ENCODE measurements at regions of chr21 and their contacts with region 1.

Region 1: DNA sequence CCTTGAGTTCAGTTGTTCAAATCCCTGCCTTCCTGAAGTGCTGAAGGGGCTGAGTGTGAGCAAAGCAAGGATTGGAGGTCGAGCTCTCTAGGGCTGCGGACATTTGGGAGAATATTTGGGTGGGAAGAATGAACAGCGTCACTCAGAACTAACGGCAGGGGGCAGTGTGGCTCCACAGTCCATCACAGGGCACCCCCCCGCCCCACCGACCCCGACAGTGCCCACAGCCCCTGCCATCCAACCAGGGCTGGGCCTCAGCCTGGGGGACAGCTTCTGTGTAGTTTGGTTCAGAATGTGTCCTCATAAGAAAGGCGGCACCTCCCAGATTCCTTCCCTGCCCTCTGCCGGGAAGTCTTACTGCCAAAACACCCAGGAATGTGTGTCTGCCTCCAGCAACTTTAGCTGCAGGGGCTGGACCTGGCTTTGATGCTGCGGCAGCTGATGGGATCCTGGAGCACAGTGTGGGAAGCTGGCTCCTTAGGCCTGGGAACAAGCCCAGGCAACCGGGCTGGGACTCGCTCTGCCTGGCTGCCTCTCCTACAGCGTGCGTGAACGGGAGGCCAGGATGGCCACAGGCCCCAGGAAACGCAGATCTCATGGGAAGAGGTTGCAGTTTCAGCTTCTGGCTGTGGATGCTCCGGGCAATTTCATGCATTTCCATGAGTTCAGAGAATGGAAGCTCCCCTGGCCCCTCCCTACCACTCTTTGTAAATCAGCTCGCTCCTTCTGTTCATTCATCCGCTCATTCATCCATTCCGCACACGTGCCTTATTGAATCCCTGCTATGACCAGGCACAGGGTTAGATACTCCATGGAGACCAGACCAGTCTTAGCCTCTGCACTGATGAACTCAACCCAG is 104.9 kb upstream of the TMPRSS2 start:
- ATAC-seq: peak; percentile 74 to 81 (median 80)
- H3K4me3 ChIP-seq: no peak overlapping the region
- H3K27ac ChIP-seq: no peak overlapping the region
- H3K4me1 ChIP-seq: peaks cover 6 to 12% of the 10 kb centered on the region in 2 donors

Region 2: DNA sequence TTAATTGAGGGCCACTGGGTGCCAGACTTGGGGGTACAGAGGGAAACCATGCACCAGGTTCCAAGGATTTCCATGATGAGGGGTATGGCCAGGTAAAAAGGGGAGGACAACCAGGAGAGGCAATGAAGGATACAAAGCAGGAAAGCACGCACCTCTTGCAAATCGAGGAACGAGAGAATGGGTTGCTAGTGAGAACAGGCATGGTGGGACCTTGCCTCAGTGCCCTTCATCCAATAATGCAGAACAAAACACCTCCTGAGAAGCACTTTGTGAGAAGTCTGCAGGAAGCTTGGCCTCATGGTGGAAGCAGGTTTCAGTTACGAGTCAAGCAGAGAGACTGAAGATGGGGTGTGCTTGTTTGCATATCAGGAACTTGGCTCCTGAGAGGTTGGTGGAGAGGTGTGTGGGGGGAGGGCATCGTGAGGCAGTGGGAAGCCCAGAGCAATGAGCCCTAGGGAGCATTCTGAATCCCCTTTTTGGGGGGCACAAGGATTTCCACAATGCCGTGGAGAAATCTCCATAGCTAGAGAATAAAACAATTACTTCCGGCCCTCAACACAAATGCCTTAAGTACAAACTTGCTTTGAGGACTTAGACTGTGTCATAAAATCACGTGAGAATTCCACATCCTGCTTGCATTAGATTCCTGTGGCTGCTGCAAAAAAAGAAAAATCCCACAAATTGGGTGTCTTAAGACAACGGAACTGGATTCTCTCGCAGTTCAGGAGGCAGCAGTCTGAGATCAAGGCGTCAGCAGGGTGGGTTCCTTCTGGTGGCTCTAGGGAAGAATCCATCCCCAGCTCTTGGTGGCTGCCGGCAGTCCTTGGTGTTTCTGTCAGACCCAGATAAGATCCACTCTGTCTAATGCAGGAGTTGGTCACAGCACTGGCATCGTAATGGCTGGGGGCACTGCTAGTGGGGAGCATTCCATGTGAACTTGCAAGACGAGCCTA is 499.9 kb before region 1 on chr21:
- in situ Hi-C with region 1: no loop called
- ATAC-seq: peak in 7 of 8 experiments; percentile 70 to 98 (median 85)
- H3K4me3 ChIP-seq: no peak overlapping the region
- H3K27ac ChIP-seq: no peak overlapping the region
- H3K4me1 ChIP-seq: peaks cover 8% of the 10 kb centered on the region in 2 donors

Region 3: GRCh38 chr21:41283211-41283818 is 329.6 kb before region 1 on chr21:
- in situ Hi-C with region 1: no loop called
- ATAC-seq: peak; percentile 91 to 99 (median 96)
- H3K4me3 ChIP-seq: no peak overlapping the region
- H3K27ac ChIP-seq: no peak overlapping the region
- H3K4me1 ChIP-seq: peaks cover 0 to 7% of the 10 kb centered on the region in 2 donors

Region 4: GRCh38 chr21:41777951-41778874 is 165.3 kb after region 1 on chr21:
- in situ Hi-C with region 1: loop called in 7 of 9 experiments (anchors 10 to 25 kb)
- ATAC-seq: peak; percentile 73 to 98 (median 94)
- H3K4me3 ChIP-seq: no peak overlapping the region
- H3K27ac ChIP-seq: no peak overlapping the region
- H3K4me1 ChIP-seq: no peaks in the 10 kb centered on the region

Region 5: DNA sequence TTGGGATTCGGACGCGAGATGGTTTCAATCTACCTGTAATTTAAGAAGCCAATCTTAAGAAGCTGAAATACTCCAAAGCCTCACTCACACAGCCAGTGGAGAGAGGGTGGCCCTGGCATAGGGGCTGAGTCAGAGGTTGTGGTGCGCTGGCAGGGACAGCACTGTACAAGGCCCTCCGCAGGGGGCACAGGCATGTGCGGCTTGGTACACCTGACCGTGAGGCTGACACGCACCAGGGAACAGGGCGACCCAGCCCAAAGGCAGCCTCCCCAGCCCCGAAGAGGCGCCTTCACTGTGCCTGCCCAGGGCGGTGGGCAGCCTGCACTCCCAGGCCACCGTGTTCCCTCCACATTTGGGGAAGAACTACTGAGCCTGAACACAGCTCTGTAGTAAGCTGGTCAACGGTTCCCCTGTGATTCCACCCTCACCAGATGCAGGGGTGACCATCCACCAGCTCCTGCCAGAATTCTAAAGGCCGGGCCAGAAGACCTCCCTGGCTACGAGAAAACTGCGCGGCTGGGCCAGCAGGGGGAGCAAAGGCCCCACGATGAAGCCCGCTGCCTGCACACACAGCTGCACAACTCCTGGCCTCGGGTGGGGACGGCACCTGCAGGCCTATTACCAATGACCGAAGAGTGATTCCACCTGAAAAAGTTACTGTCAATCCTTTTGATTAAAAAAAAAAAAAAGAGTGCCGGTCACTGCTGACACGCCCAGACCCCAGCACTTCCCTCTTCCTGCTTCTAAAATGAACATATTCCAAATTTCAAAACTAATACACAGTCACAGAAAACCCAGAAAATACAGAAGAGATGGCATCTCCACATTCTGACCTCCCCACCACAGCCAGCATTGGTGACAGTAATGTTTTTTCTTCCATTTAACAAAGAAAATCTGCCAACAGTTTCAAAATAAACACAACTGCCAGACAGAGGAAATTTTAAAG is 203.6 kb after region 1 on chr21:
- in situ Hi-C with region 1: loop called in 1 of 9 experiments (anchors 25 kb)
- ATAC-seq: peak; percentile 76 to 94 (median 79)
- H3K4me3 ChIP-seq: no peak overlapping the region
- H3K27ac ChIP-seq: no peak overlapping the region
- H3K4me1 ChIP-seq: no peaks in the 10 kb centered on the region